CD4-positive, alpha-beta memory T cell (primary cell): ENCODE measurements at regions of chr11 and their contacts with region 1.

Region 1: GRCh38 chr11:86193297-86194095 is 51.1 kb upstream of the EED start:
- DNase-seq: peak; percentile 67 to 73 (median 69)
- H3K4me3 ChIP-seq: peak overlapping the region; percentile 39 to 46
- H3K4me3 Mint-ChIP-seq: peak overlapping the region; percentile 81 to 90 (median 88)
- H3K27ac ChIP-seq: peak overlapping the region; percentile 9
- H3K27ac Mint-ChIP-seq: peak overlapping the region; percentile 53 to 88 (median 76)
- H3K4me1 ChIP-seq: peaks cover 11% of the 10 kb centered on the region
- H3K4me1 Mint-ChIP-seq: peaks cover 10 to 15% (median 13%) of the 10 kb centered on the region in 4 donors
- H3K27me3 ChIP-seq: no peaks in the 10 kb centered on the region
- H3K27me3 Mint-ChIP-seq: no peaks in the 10 kb centered on the region

Region 2: GRCh38 chr11:85595285-85595884 is 598.1 kb before region 1 on chr11:
- CTCF ChIA-PET with region 1: interaction called, 7 read pairs
- POLR2A ChIA-PET with region 1: no interaction called
- intact Hi-C with region 1: loop called (anchors 1 kb)
- DNase-seq: peak in 4 of 5 donors; percentile 41 to 63 (median 54)
- H3K4me3 ChIP-seq: no peak overlapping the region
- H3K4me3 Mint-ChIP-seq: no peak overlapping the region
- H3K27ac ChIP-seq: no peak overlapping the region
- H3K27ac Mint-ChIP-seq: no peak overlapping the region
- H3K4me1 ChIP-seq: no peaks in the 10 kb centered on the region
- H3K4me1 Mint-ChIP-seq: no peaks in the 10 kb centered on the region
- H3K27me3 ChIP-seq: no peaks in the 10 kb centered on the region
- H3K27me3 Mint-ChIP-seq: peaks cover 0 to 3% of the 10 kb centered on the region in 2 donors

Region 3: DNA sequence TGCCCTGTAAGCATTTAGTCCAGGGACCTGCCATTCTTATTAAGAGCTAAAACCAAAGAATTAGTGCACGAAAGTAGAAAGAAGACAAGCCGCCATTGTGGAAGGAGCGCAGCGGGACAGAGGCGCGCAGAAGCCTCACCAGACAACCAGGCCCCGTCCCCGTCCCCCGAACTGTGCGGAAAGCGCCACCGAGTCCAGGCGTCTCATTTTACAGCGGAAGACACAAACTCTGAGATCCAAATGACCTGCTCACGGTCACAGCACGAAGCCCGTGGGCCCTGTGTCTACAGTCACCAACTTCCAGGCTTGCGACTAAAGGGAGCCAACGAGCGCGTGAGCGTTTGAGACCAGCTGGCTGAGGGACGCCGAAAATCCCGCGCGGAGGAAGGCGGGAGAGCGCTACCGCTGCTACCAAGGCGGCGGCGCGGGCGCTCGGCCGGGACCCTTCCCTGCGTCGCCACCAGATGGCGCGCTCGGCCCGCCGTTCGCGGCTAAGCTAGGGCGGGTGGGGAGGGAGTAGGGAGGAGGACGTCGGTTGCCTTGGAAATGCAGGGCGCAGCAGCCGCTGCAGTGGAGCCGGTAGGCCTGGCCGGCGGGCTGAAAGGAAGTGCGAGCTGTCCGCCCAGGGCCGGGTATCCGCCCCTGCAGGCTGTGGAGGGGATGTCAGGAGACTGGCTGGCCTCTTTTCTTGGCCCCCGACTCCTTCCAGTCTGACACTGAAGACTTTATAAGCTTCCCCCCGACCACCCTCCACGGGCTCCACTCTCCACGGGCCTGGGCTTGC is 338.7 kb before region 1 on chr11:
- CTCF ChIA-PET with region 1: interaction called, 38 read pairs
- POLR2A ChIA-PET with region 1: interaction called, 5 read pairs
- intact Hi-C with region 1: loop called (anchors 1 kb)
- DNase-seq: peak; percentile 84 to 93 (median 88)
- H3K4me3 ChIP-seq: peak overlapping the region; percentile 81 to 95
- H3K4me3 Mint-ChIP-seq: peak overlapping the region; percentile 86 to 94 (median 91)
- H3K27ac ChIP-seq: peak overlapping the region; percentile 73
- H3K27ac Mint-ChIP-seq: peak overlapping the region; percentile 91 to 96 (median 94)
- H3K4me1 ChIP-seq: peaks cover 16% of the 10 kb centered on the region
- H3K4me1 Mint-ChIP-seq: peaks cover 6 to 16% (median 11%) of the 10 kb centered on the region in 4 donors
- H3K27me3 ChIP-seq: no peaks in the 10 kb centered on the region
- H3K27me3 Mint-ChIP-seq: peaks cover 0 to 2% of the 10 kb centered on the region in 2 donors

Region 4: DNA sequence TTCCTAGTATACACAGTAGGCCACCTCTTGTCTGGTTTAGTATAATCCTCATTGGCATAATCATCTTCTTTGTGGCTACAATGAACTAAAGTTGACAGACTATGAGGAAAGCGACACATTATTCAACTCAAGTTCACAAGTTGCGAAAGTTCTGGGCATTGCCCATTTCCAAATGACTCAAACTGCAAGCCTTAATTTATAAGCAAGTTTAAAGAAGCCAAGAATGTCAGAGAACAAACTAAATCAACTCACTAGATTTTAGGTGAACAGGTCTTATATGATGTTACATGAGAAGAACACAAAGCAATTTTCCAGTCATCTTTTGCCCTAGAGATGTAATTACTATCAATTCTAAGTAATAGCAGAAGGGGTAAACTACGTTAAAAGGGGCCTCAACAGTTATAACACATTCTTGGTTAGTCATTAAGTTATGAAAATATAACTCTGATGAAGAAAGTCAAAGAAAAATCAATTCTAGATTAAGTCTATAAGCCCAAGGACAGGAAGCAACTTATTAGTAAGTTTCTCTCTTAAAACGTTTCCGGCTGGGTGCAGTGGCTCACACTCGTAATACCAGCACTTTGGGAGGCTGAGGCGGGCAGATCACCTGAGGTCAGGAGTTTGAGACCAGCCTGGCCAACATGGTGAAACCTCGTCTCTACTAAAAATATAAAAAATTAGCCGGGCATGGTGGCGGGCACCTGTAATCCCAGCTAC is 146.1 kb before region 1 on chr11:
- CTCF ChIA-PET with region 1: interaction called, 173 read pairs
- POLR2A ChIA-PET with region 1: interaction called, 32 read pairs
- intact Hi-C with region 1: loop called (anchors 1 kb)
- DNase-seq: peak in 1 of 5 donors; percentile 56
- H3K4me3 ChIP-seq: no peak overlapping the region
- H3K4me3 Mint-ChIP-seq: peak overlapping the region; percentile 4 to 83 (median 72)
- H3K27ac ChIP-seq: peak overlapping the region; percentile 29
- H3K27ac Mint-ChIP-seq: peak overlapping the region; percentile 68 to 89 (median 81)
- H3K4me1 ChIP-seq: peaks cover 100% of the 10 kb centered on the region
- H3K4me1 Mint-ChIP-seq: peaks cover 71 to 100% (median 85%) of the 10 kb centered on the region in 4 donors
- H3K27me3 ChIP-seq: no peaks in the 10 kb centered on the region
- H3K27me3 Mint-ChIP-seq: no peaks in the 10 kb centered on the region

Region 5: GRCh38 chr11:86116386-86116726 is 77.1 kb before region 1 on chr11:
- CTCF ChIA-PET with region 1: interaction called, 4 read pairs
- POLR2A ChIA-PET with region 1: no interaction called
- intact Hi-C with region 1: loop called (anchors 5 kb)
- DNase-seq: peak in 4 of 5 donors; percentile 8 to 64 (median 20)
- H3K4me3 ChIP-seq: no peak overlapping the region
- H3K4me3 Mint-ChIP-seq: peak overlapping the region in 6 of 8 donors; percentile 12 to 40 (median 28)
- H3K27ac ChIP-seq: no peak overlapping the region
- H3K27ac Mint-ChIP-seq: peak overlapping the region in 5 of 7 donors; percentile 1 to 73 (median 14)
- H3K4me1 ChIP-seq: peaks cover 27% of the 10 kb centered on the region
- H3K4me1 Mint-ChIP-seq: peaks cover 17 to 31% (median 21%) of the 10 kb centered on the region in 4 donors
- H3K27me3 ChIP-seq: no peaks in the 10 kb centered on the region
- H3K27me3 Mint-ChIP-seq: no peaks in the 10 kb centered on the region

Region 6: DNA sequence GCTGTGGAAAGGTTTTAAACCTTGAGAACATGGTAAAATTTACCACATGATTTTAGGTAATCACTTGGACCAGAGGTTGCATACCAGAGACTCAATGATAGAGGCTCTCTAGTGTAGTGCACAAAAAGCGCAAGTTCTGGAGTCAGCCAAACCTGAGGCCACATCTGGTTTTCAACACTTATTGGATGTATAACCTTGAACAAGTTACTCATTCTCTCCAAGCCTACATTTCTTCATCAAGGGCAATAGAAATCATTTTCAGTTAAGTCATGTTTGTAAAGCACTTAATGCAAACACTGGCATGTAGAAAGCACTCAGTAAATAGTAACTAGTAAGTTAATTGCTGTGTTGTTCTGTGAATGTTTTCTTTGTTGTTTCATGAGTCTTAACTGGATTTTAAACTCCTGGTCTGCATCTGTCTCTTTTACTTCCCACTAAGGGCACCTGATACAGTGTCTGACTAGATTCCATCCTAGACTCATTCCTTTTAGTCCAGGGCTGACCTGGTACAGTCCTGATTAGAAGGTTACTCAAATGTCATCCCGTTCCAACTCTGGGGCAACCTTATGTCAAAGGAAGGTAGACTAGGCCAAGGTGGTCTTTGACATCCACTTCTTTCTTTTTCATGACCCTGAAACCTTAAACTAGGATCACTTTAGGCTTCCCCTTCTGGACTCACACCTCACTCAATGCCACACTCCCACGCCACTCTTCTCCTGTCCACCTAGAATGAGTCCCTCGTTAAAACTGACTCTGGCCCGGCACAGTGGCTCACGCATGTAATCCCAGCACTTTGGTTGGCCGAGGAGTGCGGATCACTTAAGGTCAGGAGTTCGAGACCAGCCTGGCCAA is 16.5 kb after region 1 on chr11:
- CTCF ChIA-PET with region 1: interaction called, 39 read pairs
- POLR2A ChIA-PET with region 1: no interaction called
- intact Hi-C with region 1: no loop called
- DNase-seq: no peak
- H3K4me3 ChIP-seq: no peak overlapping the region
- H3K4me3 Mint-ChIP-seq: no peak overlapping the region
- H3K27ac ChIP-seq: no peak overlapping the region
- H3K27ac Mint-ChIP-seq: no peak overlapping the region
- H3K4me1 ChIP-seq: no peaks in the 10 kb centered on the region
- H3K4me1 Mint-ChIP-seq: peaks cover 0 to 5% (median 2%) of the 10 kb centered on the region in 4 donors
- H3K27me3 ChIP-seq: no peaks in the 10 kb centered on the region
- H3K27me3 Mint-ChIP-seq: no peaks in the 10 kb centered on the region